ENCODE measurements at regions of chr4 and their contacts with region 1.

Region 1: DNA sequence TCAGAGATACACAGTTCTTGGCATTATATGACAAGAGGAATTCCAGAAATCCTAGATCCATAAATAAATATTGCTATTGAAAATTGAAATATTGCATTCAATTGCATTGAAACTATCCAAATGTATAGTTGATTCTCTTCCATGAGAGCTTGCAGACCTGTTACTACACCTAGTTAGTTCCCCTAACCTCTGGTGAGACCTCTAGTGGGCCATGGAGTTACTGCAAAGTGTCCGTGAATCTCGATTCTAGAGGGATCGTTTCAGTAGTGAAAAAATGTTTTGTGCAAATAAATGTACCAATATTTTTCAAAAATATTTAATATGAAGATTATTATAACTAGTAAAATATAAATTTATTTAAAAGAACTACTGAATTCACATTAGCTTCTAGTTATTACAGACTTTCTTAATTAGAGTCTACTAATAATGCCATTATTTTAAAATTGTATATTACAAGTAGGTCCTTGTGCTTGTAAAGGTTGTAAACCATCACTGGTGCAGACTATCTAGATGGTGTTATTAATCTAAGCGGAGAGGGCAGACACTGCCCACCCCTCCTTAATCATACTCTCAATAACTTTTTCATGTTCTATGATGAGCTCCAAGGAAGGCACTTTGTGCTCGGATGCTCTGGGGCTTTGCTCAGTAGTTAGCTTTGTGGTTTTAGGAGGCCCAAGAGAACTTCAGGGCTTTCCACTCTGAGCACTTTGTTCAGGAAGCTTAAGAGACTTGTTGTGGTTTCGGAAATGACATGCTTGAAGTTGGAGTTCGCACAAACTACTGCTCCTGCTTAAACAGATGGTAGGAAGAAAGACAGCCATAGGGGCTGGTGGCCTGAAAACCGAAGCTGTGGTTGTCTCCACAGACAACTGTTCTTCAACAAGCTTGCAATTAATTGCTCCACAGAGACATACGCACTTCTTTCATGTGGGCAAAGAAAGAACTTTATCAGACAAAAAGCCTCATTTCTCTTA is 42.8 kb downstream of the IL21 start:
- DNase-seq: peak; percentile 40
- H3K4me3 ChIP-seq: no peak overlapping the region
- H3K27ac ChIP-seq: no peak overlapping the region
- H3K4me1 ChIP-seq: no peaks in the 10 kb centered on the region
- H3K27me3 ChIP-seq: peaks cover 2% of the 10 kb centered on the region in 2 experiments
- CTCF ChIP-seq: peak; percentile 50 to 60
- POLR2A ChIP-seq: no peak

Region 2: GRCh38 chr4:121900132-121900983 is 677.7 kb before region 1 on chr4:
- CTCF ChIA-PET with region 1: interaction called, 139 read pairs
- POLR2A ChIA-PET with region 1: no interaction called
- dilution Hi-C with region 1: no loop called
- intact Hi-C with region 1: loop called (anchors 1 kb)
- DNase-seq: peak; percentile 61
- H3K4me3 ChIP-seq: no peak overlapping the region
- H3K27ac ChIP-seq: no peak overlapping the region
- H3K4me1 ChIP-seq: no peaks in the 10 kb centered on the region
- H3K27me3 ChIP-seq: peaks cover 2 to 13% of the 10 kb centered on the region in 2 experiments
- CTCF ChIP-seq: peak; percentile 50 to 57
- POLR2A ChIP-seq: no peak

Region 3: GRCh38 chr4:122151982-122152710 is 425.9 kb before region 1 on chr4 and contains the start of gene BLTP1:
- CTCF ChIA-PET with region 1: no interaction called
- POLR2A ChIA-PET with region 1: no interaction called
- dilution Hi-C with region 1: no loop called
- intact Hi-C with region 1: loop called (anchors 5 kb)
- DNase-seq: peak; percentile 89
- H3K4me3 ChIP-seq: peak within 1 kb of the TSS; percentile 52 to 79 (median 73)
- H3K27ac ChIP-seq: peak within 1 kb of the TSS; percentile 50
- H3K4me1 ChIP-seq: peaks cover 6% of the 10 kb centered on the region
- H3K27me3 ChIP-seq: peaks cover 0 to 2% of the 10 kb centered on the region in 2 experiments
- CTCF ChIP-seq: no peak
- POLR2A ChIP-seq: peak; percentile 80
- total RNA-seq, gene BLTP1: 37.5 and 47.1 TPM in 2 replicates

Region 4: GRCh38 chr4:122309988-122310626 is 268.0 kb before region 1 on chr4:
- CTCF ChIA-PET with region 1: no interaction called
- POLR2A ChIA-PET with region 1: no interaction called
- dilution Hi-C with region 1: no loop called
- intact Hi-C with region 1: loop called (anchors 1 kb)
- DNase-seq: no peak
- H3K4me3 ChIP-seq: no peak overlapping the region
- H3K27ac ChIP-seq: no peak overlapping the region
- H3K4me1 ChIP-seq: no peaks in the 10 kb centered on the region
- H3K27me3 ChIP-seq: no peaks in the 10 kb centered on the region
- CTCF ChIP-seq: peak in 1 of 2 donors; percentile 10
- POLR2A ChIP-seq: no peak

Region 5: GRCh38 chr4:122329876-122330565 is 248.1 kb before region 1 on chr4:
- CTCF ChIA-PET with region 1: no interaction called
- POLR2A ChIA-PET with region 1: no interaction called
- dilution Hi-C with region 1: no loop called
- intact Hi-C with region 1: no loop called
- DNase-seq: no peak
- H3K4me3 ChIP-seq: no peak overlapping the region
- H3K27ac ChIP-seq: no peak overlapping the region
- H3K4me1 ChIP-seq: no peaks in the 10 kb centered on the region
- H3K27me3 ChIP-seq: no peaks in the 10 kb centered on the region
- CTCF ChIP-seq: no peak
- POLR2A ChIP-seq: no peak

Region 6: GRCh38 chr4:122930862-122931261 is 352.8 kb after region 1 on chr4:
- CTCF ChIA-PET with region 1: interaction called, 25 read pairs
- POLR2A ChIA-PET with region 1: no interaction called
- dilution Hi-C with region 1: no loop called
- intact Hi-C with region 1: loop called (anchors 2 kb)
- DNase-seq: peak; percentile 40
- H3K4me3 ChIP-seq: no peak overlapping the region
- H3K27ac ChIP-seq: no peak overlapping the region
- H3K4me1 ChIP-seq: no peaks in the 10 kb centered on the region
- H3K27me3 ChIP-seq: no peaks in the 10 kb centered on the region
- CTCF ChIP-seq: peak in 1 of 2 donors; percentile 25
- POLR2A ChIP-seq: no peak